B cell (primary cell): ENCODE measurements at regions of chr1 and their contacts with region 1.

Region 1: GRCh38 chr1:157090196-157090647 is 9.4 kb downstream of the ETV3L start:
- DNase-seq: peak; percentile 83
- ATAC-seq: peak; percentile 78
- H3K4me3 ChIP-seq: no peak overlapping the region
- H3K4me3 Mint-ChIP-seq: no peak overlapping the region
- H3K27ac ChIP-seq: no peak overlapping the region
- H3K27ac Mint-ChIP-seq: no peak overlapping the region
- H3K4me1 ChIP-seq: no peaks in the 10 kb centered on the region
- H3K4me1 Mint-ChIP-seq: no peaks in the 10 kb centered on the region
- H3K27me3 ChIP-seq: peaks cover 0 to 5% (median 0%) of the 10 kb centered on the region in 4 experiments
- H3K27me3 Mint-ChIP-seq: peaks cover 7% of the 10 kb centered on the region
- CTCF ChIP-seq: peak; percentile 97

Region 2: GRCh38 chr1:157069601-157070000 is 20.6 kb before region 1 on chr1:
- CTCF ChIA-PET with region 1: interaction called, 14 read pairs
- POLR2A ChIA-PET with region 1: no interaction called
- intact Hi-C with region 1: no loop called
- DNase-seq: no peak
- ATAC-seq: no peak
- H3K4me3 ChIP-seq: no peak overlapping the region
- H3K4me3 Mint-ChIP-seq: no peak overlapping the region
- H3K27ac ChIP-seq: no peak overlapping the region
- H3K27ac Mint-ChIP-seq: no peak overlapping the region
- H3K4me1 ChIP-seq: peaks cover 0 to 4% of the 10 kb centered on the region in 2 donors
- H3K4me1 Mint-ChIP-seq: peaks cover 3% of the 10 kb centered on the region
- H3K27me3 ChIP-seq: peaks cover 0 to 22% (median 9%) of the 10 kb centered on the region in 4 experiments
- H3K27me3 Mint-ChIP-seq: peaks cover 37% of the 10 kb centered on the region
- CTCF ChIP-seq: no peak

Region 3: DNA sequence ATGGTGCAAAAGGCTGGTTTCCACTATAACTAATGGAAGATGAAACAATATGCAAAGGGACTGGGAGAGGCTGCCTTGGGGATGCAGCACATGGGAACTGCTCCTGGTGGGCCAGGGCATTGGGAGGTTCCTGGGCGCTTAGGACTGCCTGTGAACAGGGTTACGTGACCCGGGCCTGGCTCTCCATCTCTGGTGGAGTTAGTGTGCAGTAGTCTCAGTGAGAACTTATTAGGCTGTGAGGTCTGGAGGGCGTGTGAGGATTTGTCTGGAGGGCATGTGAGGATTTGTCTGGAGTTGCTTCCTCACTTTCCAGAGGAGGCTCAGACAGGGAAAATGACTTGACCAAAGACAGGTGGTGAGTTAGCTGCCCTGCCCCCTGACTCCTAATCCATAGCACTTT is 10.9 kb after region 1 on chr1:
- CTCF ChIA-PET with region 1: interaction called, 10 read pairs
- POLR2A ChIA-PET with region 1: no interaction called
- intact Hi-C with region 1: no loop called
- DNase-seq: no peak
- ATAC-seq: no peak
- H3K4me3 ChIP-seq: no peak overlapping the region
- H3K4me3 Mint-ChIP-seq: no peak overlapping the region
- H3K27ac ChIP-seq: no peak overlapping the region
- H3K27ac Mint-ChIP-seq: no peak overlapping the region
- H3K4me1 ChIP-seq: no peaks in the 10 kb centered on the region
- H3K4me1 Mint-ChIP-seq: no peaks in the 10 kb centered on the region
- H3K27me3 ChIP-seq: no peaks in the 10 kb centered on the region
- H3K27me3 Mint-ChIP-seq: peaks cover 26% of the 10 kb centered on the region
- CTCF ChIP-seq: no peak

Region 4: DNA sequence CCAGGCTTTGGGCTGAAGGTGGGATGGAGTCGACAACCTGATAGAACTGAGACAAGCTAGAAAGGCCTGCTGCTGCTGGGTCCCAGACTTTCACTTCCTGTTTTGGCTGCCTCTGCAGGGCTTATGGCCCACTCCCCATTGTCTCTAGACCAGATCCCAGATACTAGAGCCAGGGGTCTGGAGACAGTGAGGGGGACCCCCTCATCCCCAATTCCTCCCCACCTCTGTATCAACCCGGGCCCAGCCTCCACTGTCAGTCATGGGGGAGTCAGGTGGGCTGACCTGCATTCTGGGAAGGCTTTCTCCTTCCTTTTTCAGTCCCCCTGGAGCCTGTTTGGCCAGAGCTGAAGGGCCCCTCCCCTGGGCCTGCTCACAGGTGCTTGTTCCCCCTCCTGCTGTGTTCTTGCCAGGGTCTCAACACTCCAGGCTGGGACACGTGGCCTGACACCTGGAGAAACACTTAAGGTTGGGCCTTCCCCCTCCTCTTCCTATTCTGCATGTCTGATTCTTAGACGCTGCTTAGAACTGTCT is 27.4 kb after region 1 on chr1:
- CTCF ChIA-PET with region 1: interaction called, 10 read pairs
- POLR2A ChIA-PET with region 1: no interaction called
- intact Hi-C with region 1: no loop called
- DNase-seq: peak; percentile 68
- ATAC-seq: peak; percentile 79
- H3K4me3 ChIP-seq: no peak overlapping the region
- H3K4me3 Mint-ChIP-seq: no peak overlapping the region
- H3K27ac ChIP-seq: no peak overlapping the region
- H3K27ac Mint-ChIP-seq: peak overlapping the region; percentile 77
- H3K4me1 ChIP-seq: peaks cover 11 to 12% of the 10 kb centered on the region in 2 donors
- H3K4me1 Mint-ChIP-seq: peaks cover 13% of the 10 kb centered on the region
- H3K27me3 ChIP-seq: peaks cover 0 to 5% (median 0%) of the 10 kb centered on the region in 4 experiments
- H3K27me3 Mint-ChIP-seq: no peaks in the 10 kb centered on the region
- CTCF ChIP-seq: no peak

Region 5: GRCh38 chr1:157142765-157143423 is 52.7 kb after region 1 on chr1:
- CTCF ChIA-PET with region 1: interaction called, 16 read pairs
- POLR2A ChIA-PET with region 1: no interaction called
- intact Hi-C with region 1: no loop called
- DNase-seq: no peak
- ATAC-seq: no peak
- H3K4me3 ChIP-seq: no peak overlapping the region
- H3K4me3 Mint-ChIP-seq: no peak overlapping the region
- H3K27ac ChIP-seq: no peak overlapping the region
- H3K27ac Mint-ChIP-seq: no peak overlapping the region
- H3K4me1 ChIP-seq: peaks cover 5 to 9% of the 10 kb centered on the region in 2 donors
- H3K4me1 Mint-ChIP-seq: peaks cover 14% of the 10 kb centered on the region
- H3K27me3 ChIP-seq: no peaks in the 10 kb centered on the region
- H3K27me3 Mint-ChIP-seq: peaks cover 12% of the 10 kb centered on the region
- CTCF ChIP-seq: no peak

Region 6: GRCh38 chr1:157147906-157148717 is 57.9 kb after region 1 on chr1:
- CTCF ChIA-PET with region 1: interaction called, 491 read pairs
- POLR2A ChIA-PET with region 1: no interaction called
- intact Hi-C with region 1: no loop called
- DNase-seq: no peak
- ATAC-seq: no peak
- H3K4me3 ChIP-seq: no peak overlapping the region
- H3K4me3 Mint-ChIP-seq: no peak overlapping the region
- H3K27ac ChIP-seq: peak overlapping the region in 1 of 2 donors; percentile 18
- H3K27ac Mint-ChIP-seq: no peak overlapping the region
- H3K4me1 ChIP-seq: peaks cover 4 to 6% of the 10 kb centered on the region in 2 donors
- H3K4me1 Mint-ChIP-seq: peaks cover 8% of the 10 kb centered on the region
- H3K27me3 ChIP-seq: no peaks in the 10 kb centered on the region
- H3K27me3 Mint-ChIP-seq: peaks cover 15% of the 10 kb centered on the region
- CTCF ChIP-seq: no peak

Region 7: GRCh38 chr1:157156058-157156541 is 65.9 kb after region 1 on chr1:
- CTCF ChIA-PET with region 1: interaction called, 491 read pairs
- POLR2A ChIA-PET with region 1: interaction called, 11 read pairs
- intact Hi-C with region 1: no loop called
- DNase-seq: peak; percentile 83
- ATAC-seq: peak; percentile 88
- H3K4me3 ChIP-seq: no peak overlapping the region
- H3K4me3 Mint-ChIP-seq: peak overlapping the region; percentile 38
- H3K27ac ChIP-seq: no peak overlapping the region
- H3K27ac Mint-ChIP-seq: peak overlapping the region; percentile 51
- H3K4me1 ChIP-seq: peaks cover 3 to 11% of the 10 kb centered on the region in 2 donors
- H3K4me1 Mint-ChIP-seq: peaks cover 4% of the 10 kb centered on the region
- H3K27me3 ChIP-seq: peaks cover 0 to 31% (median 12%) of the 10 kb centered on the region in 4 experiments
- H3K27me3 Mint-ChIP-seq: peaks cover 43% of the 10 kb centered on the region
- CTCF ChIP-seq: peak; percentile 97

Region 8: GRCh38 chr1:157415661-157416060 is 325.4 kb after region 1 on chr1:
- CTCF ChIA-PET with region 1: no interaction called
- POLR2A ChIA-PET with region 1: no interaction called
- intact Hi-C with region 1: no loop called
- DNase-seq: no peak
- ATAC-seq: no peak
- H3K4me3 ChIP-seq: no peak overlapping the region
- H3K4me3 Mint-ChIP-seq: no peak overlapping the region
- H3K27ac ChIP-seq: no peak overlapping the region
- H3K27ac Mint-ChIP-seq: no peak overlapping the region
- H3K4me1 ChIP-seq: no peaks in the 10 kb centered on the region
- H3K4me1 Mint-ChIP-seq: no peaks in the 10 kb centered on the region
- H3K27me3 ChIP-seq: peaks cover 0 to 20% (median 4%) of the 10 kb centered on the region in 4 experiments
- H3K27me3 Mint-ChIP-seq: peaks cover 41% of the 10 kb centered on the region
- CTCF ChIP-seq: no peak